Left lung (tissue), 14 donors: ENCODE measurements at regions of chr2 and their contacts with region 1.

Region 1: GRCh38 chr2:108351889-108352288 is 25.9 kb upstream of the SULT1C4 start:
- DNase-seq: no peak
- ATAC-seq: no peak
- H3K4me3 ChIP-seq: no peak overlapping the region
- H3K27ac ChIP-seq: no peak overlapping the region
- H3K4me1 ChIP-seq: peaks cover 0 to 4% of the 10 kb centered on the region in 2 donors
- H3K27me3 ChIP-seq: no peaks in the 10 kb centered on the region
- CTCF ChIP-seq: no peak

Region 2: GRCh38 chr2:108297436-108298141 is 54.3 kb before region 1 on chr2:
- intact Hi-C with region 1: no loop called
- DNase-seq: no peak
- ATAC-seq: no peak
- H3K4me3 ChIP-seq: no peak overlapping the region
- H3K27ac ChIP-seq: no peak overlapping the region
- H3K4me1 ChIP-seq: no peaks in the 10 kb centered on the region
- H3K27me3 ChIP-seq: no peaks in the 10 kb centered on the region
- CTCF ChIP-seq: no peak

Region 3: DNA sequence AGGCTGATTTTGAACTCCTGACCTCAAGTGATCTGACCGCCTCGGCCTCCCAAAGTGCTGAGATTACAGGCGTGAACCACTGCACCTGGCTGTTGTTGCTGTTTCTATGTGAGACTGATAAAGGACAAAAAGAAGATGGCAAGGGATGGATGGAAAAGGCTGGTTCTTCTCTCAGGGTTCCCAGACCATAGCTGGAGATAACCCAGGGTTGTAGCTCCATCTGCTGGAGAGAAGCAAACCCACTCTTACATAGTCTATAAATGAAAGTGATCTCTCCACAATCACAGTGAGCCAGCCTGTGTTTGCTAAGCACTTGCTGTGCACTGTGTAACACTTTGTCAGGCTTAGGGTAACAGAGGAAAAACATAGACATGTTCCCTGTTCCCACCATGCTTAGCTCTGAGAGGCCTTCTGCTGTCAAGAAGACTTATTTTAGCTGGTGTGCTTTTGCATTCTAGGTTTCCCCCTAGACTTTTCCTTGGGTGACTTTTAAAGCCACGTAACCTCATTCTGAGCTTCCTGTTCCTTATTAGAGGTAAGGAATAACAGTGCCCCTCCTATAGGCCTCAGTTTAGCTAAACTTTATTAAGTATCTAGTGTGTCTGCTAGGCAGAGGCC is 232.1 kb after region 1 on chr2:
- intact Hi-C with region 1: loop called in 1 of 2 experiments (anchors 10 kb)
- DNase-seq: peak in 3 of 4 donors; percentile 50 to 87 (median 73)
- ATAC-seq: peak; percentile 90
- H3K4me3 ChIP-seq: no peak overlapping the region
- H3K27ac ChIP-seq: peak overlapping the region in 1 of 2 donors; percentile 45
- H3K4me1 ChIP-seq: peaks cover 30 to 70% of the 10 kb centered on the region in 2 donors
- H3K27me3 ChIP-seq: no peaks in the 10 kb centered on the region
- CTCF ChIP-seq: peak; percentile 72 to 76